ENCODE measurements at regions of chr10 and their contacts with region 1.

Region 1: DNA sequence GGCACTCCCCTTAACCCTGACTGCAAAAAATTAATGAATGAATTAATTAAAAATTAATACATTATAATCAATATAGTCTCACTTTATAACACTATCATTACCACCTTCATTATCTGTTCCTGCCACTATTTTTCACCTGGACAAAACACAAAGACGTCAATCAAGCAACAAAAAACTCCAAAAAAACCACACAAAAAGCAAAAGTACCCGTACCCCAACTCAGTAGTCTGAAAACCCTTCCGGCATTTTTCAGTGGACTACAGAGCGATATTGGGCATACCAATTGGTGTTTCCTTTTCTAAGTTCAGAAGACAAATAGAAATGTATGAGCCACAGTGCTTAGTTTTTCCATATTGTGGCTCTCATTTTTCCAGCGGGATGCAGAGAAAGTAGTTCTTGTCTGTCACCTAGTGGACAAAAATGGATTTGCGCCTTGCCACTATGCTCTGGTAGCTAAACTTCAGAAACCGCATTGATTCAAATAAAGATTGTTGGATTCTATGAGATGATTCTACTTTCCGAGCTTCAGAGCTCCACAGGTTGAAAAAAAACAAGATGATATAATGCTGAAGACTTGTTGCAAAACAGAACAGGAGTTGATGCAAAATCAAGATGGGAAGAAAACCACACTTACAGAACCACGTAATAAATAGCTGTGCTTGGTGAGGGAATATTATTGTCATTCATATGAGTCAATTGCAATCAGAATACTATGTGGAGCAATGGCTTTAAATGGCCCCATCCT is 50.6 kb upstream of the ITGB1 start:
- DNase-seq: peak; percentile 79
- H3K4me3 Mint-ChIP-seq: peak overlapping the region; percentile 66
- H3K27ac Mint-ChIP-seq: peak overlapping the region; percentile 76
- H3K4me1 Mint-ChIP-seq: peaks cover 43% of the 10 kb centered on the region
- H3K27me3 Mint-ChIP-seq: no peaks in the 10 kb centered on the region

Region 2: GRCh38 chr10:32413513-32413912 is 595.2 kb before region 1 on chr10:
- CTCF ChIA-PET with region 1: no interaction called
- POLR2A ChIA-PET with region 1: no interaction called
- intact Hi-C with region 1: loop called (anchors 2 kb)
- DNase-seq: peak; percentile 79
- H3K4me3 Mint-ChIP-seq: no peak overlapping the region
- H3K27ac Mint-ChIP-seq: peak overlapping the region; percentile 26
- H3K4me1 Mint-ChIP-seq: peaks cover 17% of the 10 kb centered on the region
- H3K27me3 Mint-ChIP-seq: no peaks in the 10 kb centered on the region

Region 3: DNA sequence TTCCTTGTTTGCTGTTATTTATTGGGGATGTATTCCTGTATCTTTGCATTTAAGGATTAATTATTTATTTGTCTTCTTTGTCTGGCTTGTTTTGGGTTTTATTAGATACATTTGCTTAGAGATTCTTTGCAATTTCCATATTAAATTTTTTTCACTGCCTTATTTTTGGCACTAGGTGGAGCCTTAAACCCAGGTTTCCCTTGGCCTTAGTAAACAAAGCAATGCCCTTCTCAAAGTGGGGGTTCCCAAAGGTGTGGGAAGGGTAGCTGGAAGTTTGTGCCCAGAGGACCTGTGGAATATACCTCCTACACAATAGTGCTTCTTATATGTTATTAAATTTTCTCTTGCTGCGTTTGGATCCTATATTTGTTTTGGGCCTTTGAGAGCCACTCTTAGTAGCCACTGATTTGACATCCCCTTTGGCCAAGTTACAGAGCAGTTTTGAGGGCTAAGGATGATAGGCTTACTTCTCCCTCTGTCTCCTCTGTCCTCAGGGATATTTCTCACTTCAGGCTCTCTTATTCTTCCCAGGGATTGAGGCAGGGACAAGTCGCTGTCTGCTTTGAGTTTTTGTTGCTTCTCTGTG is 213.0 kb before region 1 on chr10:
- CTCF ChIA-PET with region 1: interaction called, 5 read pairs
- POLR2A ChIA-PET with region 1: no interaction called
- intact Hi-C with region 1: loop called (anchors 1 kb)
- DNase-seq: no peak
- H3K4me3 Mint-ChIP-seq: no peak overlapping the region
- H3K27ac Mint-ChIP-seq: no peak overlapping the region
- H3K4me1 Mint-ChIP-seq: no peaks in the 10 kb centered on the region
- H3K27me3 Mint-ChIP-seq: no peaks in the 10 kb centered on the region

Region 4: GRCh38 chr10:33026422-33026821 is 17.8 kb after region 1 on chr10:
- CTCF ChIA-PET with region 1: interaction called, 5 read pairs
- POLR2A ChIA-PET with region 1: interaction called, 5 read pairs
- intact Hi-C with region 1: loop called (anchors 2 kb)
- DNase-seq: no peak
- H3K4me3 Mint-ChIP-seq: no peak overlapping the region
- H3K27ac Mint-ChIP-seq: no peak overlapping the region
- H3K4me1 Mint-ChIP-seq: peaks cover 50% of the 10 kb centered on the region
- H3K27me3 Mint-ChIP-seq: no peaks in the 10 kb centered on the region

Region 5: DNA sequence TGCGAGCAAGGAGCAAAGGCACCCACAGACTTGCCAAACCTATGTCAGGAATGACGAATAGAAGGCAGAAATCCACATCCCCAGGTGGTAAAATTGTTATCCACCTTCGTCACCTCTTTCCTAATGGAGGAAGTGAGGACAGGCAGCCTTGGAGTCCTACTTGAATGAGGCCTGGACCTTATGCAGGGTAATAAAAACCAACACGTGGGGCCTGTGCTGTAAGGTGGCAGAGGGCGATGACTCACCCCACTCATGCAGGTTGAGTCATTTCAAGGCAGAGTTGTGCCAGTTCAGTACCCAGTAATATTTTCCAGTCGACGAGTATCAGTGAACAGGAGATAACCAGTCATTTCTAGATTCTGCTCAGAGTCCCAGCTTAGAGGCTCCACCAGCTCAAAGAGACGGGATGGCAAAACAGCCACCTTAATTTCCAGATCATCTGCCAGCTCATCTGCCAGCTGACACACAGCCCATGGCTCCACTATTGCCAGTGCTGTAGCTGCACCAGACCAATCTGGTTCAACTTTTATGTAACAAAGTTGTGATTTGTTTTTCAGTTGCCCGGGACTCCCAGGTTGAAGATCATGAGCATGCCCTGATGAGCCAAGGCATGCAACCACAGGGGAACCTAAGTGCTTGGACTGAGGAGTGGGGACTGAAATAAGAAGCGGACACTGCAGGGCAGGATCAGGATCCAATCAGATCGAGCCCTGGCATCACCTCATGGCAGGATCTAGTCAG is 125.5 kb after region 1 on chr10:
- CTCF ChIA-PET with region 1: interaction called, 38 read pairs
- POLR2A ChIA-PET with region 1: interaction called, 11 read pairs
- intact Hi-C with region 1: loop called (anchors 1 kb)
- DNase-seq: peak; percentile 90
- H3K4me3 Mint-ChIP-seq: peak overlapping the region; percentile 50
- H3K27ac Mint-ChIP-seq: peak overlapping the region; percentile 90
- H3K4me1 Mint-ChIP-seq: peaks cover 91% of the 10 kb centered on the region
- H3K27me3 Mint-ChIP-seq: peaks cover 1% of the 10 kb centered on the region

Region 6: GRCh38 chr10:33248638-33249037 is 240.0 kb after region 1 on chr10:
- CTCF ChIA-PET with region 1: interaction called, 4 read pairs
- POLR2A ChIA-PET with region 1: no interaction called
- intact Hi-C with region 1: loop called (anchors 5 kb)
- DNase-seq: no peak
- H3K4me3 Mint-ChIP-seq: peak overlapping the region; percentile 38
- H3K27ac Mint-ChIP-seq: peak overlapping the region; percentile 64
- H3K4me1 Mint-ChIP-seq: peaks cover 60% of the 10 kb centered on the region
- H3K27me3 Mint-ChIP-seq: peaks cover 11% of the 10 kb centered on the region

Region 7: DNA sequence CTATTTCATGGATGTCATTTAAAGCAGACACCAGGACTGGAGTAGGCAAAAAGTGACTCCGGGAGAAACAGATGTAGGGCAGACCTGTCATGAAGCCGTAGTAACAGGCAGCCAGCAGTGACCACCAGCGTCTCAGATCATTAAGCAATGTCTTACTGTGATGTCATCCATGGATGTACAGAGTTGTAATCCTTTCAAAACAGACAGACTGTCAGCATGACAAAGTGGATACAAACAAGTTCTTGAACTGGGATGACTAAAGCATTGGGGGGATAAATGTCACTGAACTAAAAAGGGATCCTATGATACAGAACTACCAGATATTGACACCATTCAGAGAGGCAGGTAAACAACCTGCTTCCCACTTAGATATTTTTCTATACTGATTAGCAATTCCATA is 1130.9 kb after region 1 on chr10:
- CTCF ChIA-PET with region 1: no interaction called
- POLR2A ChIA-PET with region 1: no interaction called
- intact Hi-C with region 1: no loop called
- DNase-seq: no peak
- H3K4me3 Mint-ChIP-seq: no peak overlapping the region
- H3K27ac Mint-ChIP-seq: no peak overlapping the region
- H3K4me1 Mint-ChIP-seq: no peaks in the 10 kb centered on the region
- H3K27me3 Mint-ChIP-seq: peaks cover 9% of the 10 kb centered on the region